ENCODE measurements at regions of chr7 and their contacts with region 1.

Region 1: GRCh38 chr7:47045207-47046051 is 536.5 kb downstream of the TNS3 start:
- DNase-seq: peak; percentile 67
- ATAC-seq: peak; percentile 76

Region 2: GRCh38 chr7:46932676-46933424 is 112.6 kb before region 1 on chr7:
- intact Hi-C with region 1: loop called (anchors 10 kb)
- DNase-seq: peak; percentile 69
- ATAC-seq: peak; percentile 87

Region 3: DNA sequence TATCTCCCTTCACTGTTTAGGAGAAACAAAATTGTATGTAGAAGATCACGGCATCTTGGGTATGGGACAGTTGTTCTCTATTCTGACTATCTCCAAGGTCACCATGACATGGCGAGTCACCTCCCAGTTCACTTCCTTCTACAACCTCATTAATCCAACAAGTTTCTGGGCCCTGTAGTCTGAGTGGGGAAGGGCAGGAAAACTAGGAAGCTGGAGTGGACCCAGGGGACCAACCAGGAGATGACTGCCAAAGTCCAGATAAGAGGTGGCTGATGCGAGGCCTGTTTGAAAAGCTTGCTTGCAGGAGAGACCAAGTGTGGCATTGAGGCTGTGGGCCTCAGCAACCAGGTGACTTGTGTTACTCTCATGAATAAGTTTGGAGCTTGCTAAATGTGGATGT is 48.5 kb before region 1 on chr7:
- intact Hi-C with region 1: loop called (anchors 1 kb)
- DNase-seq: no peak
- ATAC-seq: no peak

Region 4: DNA sequence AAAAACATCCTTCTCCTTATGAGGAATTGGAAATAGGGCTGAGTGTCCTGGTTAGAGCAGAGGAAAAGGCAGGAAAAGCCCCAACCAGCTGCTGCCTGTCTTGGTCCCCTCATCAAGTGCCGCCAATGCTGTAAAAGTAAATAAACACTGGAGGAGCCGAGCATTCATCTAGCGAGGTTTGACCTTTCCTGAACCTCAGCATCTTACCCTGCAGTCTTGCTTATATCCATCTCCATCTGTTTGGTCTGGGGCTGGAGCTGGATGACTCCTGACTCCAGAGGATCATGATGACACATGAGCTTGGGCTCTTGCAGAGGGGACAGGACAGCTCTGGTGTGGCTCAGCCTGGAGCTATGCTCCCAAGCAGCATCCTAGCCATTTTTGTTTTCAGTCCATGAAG is 35.4 kb after region 1 on chr7:
- intact Hi-C with region 1: no loop called
- DNase-seq: no peak
- ATAC-seq: peak; percentile 64